ENCODE measurements at regions of chr5 and their contacts with region 1.

Region 1: DNA sequence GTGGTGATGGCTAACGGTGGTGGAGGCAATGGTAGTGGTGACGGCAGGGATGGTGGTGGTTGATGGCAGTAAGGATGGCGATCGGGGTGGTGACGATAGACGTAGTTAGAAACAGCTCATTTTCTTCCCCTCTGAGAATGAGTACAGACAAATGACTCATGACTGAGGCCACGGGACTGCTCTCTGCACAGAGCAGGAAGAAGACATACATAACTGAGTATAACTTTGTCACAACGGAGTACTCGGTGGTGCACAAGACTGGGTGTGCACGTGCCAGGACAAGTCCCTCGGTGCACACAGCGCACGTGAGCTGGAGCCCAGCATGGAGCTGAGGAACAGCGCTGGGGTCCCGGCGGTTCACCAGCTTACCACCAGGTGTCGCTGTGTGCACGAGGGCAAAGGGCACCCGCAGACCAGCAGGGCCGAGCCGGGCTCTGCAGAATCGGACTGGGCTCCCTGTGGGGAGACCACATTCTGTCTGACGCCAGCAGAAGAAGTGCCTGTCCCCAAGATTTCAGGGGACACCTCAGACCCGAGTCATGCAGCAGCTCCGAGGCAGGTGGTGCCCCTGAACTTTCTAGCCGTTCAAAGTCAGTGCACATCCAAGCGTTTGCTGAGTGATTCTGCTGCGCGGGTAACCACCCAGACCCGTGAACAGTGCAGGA is 188.6 kb downstream of the FSTL4 start:
- DNase-seq: peak; percentile 39 to 58 (median 52)
- H3K4me3 ChIP-seq: no peak overlapping the region
- H3K27ac ChIP-seq: no peak overlapping the region
- H3K4me1 ChIP-seq: peaks cover 0 to 3% (median 0%) of the 10 kb centered on the region in 4 experiments
- H3K27me3 ChIP-seq: peaks cover 0 to 4% (median 2%) of the 10 kb centered on the region in 5 experiments

Region 2: GRCh38 chr5:133944263-133945185 is 520.8 kb after region 1 on chr5:
- CTCF ChIA-PET with region 1: interaction called, 28 read pairs
- POLR2A ChIA-PET with region 1: no interaction called
- DNase-seq: peak; percentile 54 to 73 (median 62)
- H3K4me3 ChIP-seq: no peak overlapping the region
- H3K27ac ChIP-seq: no peak overlapping the region
- H3K4me1 ChIP-seq: peaks cover 0 to under 1% (median 0%) of the 10 kb centered on the region in 4 experiments
- H3K27me3 ChIP-seq: no peaks in the 10 kb centered on the region